Thyroid gland (tissue), 4 donors: ENCODE measurements at regions of chr7 and their contacts with region 1.

Region 1: DNA sequence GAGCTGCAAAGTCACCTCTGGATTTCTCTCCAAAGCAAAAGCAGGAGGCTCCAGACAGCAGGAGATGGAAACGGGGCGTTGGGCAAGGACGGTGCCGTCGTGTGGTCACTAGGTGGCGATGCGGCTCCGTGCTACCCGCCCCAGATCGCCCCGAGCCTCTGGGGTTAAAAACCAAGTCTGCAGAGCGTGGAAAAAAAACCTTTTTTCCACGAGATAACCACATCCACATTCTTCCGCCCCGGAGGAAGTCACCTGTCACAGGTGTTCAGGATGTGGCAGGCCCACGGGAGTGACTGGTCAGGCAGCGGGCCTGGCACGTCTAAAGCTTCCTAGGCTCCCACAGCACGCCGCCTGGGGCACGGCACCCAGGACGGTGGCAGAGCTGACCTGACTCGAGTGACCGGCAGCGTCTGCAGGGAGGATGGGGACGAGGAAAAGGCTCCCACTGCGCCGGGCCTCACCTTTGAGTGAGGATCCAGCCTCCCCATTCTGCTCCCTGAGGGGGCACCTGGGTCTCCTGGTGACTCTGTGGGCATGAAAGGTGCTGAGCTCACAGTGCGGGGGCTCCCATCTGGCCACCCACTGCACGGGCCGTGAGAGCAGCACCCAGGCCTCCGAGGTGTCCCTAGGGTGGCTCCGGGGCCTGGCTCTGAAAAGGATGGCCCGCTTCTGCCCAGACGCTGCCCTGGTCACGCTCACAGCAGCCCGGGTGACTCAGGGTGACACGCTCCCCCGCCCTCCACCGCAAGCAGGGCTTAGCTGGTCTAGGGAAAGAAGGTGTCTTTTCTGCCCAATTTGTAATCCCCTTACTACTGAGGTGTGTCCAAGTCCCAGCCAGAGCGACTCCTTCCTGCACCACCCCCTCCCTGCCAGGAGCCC is 71.3 kb upstream of the TNRC18 start:
- DNase-seq: peak; percentile 77 to 82
- H3K4me3 ChIP-seq: no peak overlapping the region
- H3K27ac ChIP-seq: peak overlapping the region in 2 of 3 donors; percentile 33 to 53
- H3K4me1 ChIP-seq: peaks cover 15 to 30% of the 10 kb centered on the region in 2 donors
- H3K27me3 ChIP-seq: no peaks in the 10 kb centered on the region
- CTCF ChIP-seq: peak; percentile 69 to 98 (median 94)
- POLR2A ChIP-seq: no peak

Region 2: GRCh38 chr7:5557920-5558401 is 63.0 kb after region 1 on chr7:
- intact Hi-C with region 1: loop called (anchors 2 kb)
- DNase-seq: peak; percentile 58 to 75
- H3K4me3 ChIP-seq: no peak overlapping the region
- H3K27ac ChIP-seq: peak overlapping the region; percentile 99 to 100 (median 99)
- H3K4me1 ChIP-seq: peaks cover 40 to 54% of the 10 kb centered on the region in 2 donors
- H3K27me3 ChIP-seq: no peaks in the 10 kb centered on the region
- CTCF ChIP-seq: no peak
- POLR2A ChIP-seq: peak in 1 of 2 donors; percentile 40

Region 3: DNA sequence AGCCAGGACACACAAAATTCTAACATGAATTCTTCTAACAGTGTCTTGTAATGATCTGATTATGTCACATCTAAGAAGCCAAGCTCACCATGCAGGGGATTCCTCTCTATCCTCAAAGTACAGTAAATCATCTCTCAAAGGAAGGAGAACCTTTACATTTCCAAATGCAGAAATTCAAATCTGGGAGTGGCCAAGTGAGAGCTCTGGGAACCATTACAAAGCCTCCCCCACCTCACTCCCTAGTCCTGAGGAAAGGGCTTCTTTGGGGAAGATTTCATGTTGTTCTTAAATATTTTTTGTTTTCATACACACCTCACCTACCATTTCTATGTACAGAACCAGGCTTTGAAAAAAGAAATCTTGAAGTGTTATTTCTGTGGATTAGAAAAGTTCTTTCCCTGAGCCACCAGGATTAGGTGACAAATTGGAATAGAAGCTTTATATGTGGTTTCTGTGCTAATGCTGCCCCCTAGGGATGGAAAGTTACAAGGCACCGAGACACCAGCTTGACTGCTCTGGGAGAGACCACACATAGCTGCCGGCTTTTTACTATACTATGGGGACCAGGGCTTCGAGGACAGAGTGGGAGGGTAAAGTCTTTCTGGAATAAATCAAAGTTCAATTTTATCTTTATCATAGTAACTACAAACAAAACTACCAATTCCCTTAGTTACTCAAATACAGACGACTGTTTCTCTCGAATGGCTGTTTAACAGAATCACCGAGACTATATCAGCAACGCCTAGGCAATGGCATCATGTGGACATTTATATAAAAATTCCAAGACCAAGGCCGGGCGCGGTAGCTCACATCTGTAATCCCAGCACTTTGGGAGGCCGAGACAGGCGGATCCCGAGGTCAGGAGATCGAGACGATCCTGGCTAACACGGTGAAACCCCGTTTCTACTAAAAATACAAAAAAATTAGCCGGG is 170.4 kb after region 1 on chr7:
- intact Hi-C with region 1: loop called (anchors 2 kb)
- DNase-seq: peak; percentile 77 to 82
- H3K4me3 ChIP-seq: no peak overlapping the region
- H3K27ac ChIP-seq: no peak overlapping the region
- H3K4me1 ChIP-seq: no peaks in the 10 kb centered on the region
- H3K27me3 ChIP-seq: no peaks in the 10 kb centered on the region
- CTCF ChIP-seq: peak; percentile 72 to 99 (median 86)
- POLR2A ChIP-seq: no peak

Region 4: DNA sequence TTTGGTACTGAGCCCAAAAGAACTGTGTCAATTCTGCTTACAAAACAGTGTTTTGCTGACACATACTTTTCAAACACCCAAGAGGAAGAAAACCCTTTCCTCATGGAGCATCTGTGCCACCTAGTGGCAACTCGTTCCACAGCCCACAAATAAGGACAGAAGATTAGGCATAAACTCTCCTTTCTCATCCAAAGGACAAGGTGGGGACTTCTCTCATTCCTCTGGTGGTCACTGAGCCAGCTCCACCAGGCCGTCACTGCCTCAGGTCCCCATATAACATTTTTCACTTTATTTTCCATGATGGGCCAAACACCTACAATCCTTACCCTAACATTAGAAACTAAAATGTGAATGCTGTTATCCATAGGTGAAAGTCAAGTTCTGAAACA is 209.6 kb after region 1 on chr7:
- intact Hi-C with region 1: loop called (anchors 10 kb)
- DNase-seq: peak; percentile 85 to 87
- H3K4me3 ChIP-seq: no peak overlapping the region
- H3K27ac ChIP-seq: peak overlapping the region in 2 of 3 donors; percentile 7 to 34
- H3K4me1 ChIP-seq: peaks cover 17 to 25% of the 10 kb centered on the region in 2 donors
- H3K27me3 ChIP-seq: no peaks in the 10 kb centered on the region
- CTCF ChIP-seq: peak; percentile 65 to 98 (median 92)
- POLR2A ChIP-seq: no peak